ENCODE measurements at regions of chr12 and their contacts with region 1.

Region 1: DNA sequence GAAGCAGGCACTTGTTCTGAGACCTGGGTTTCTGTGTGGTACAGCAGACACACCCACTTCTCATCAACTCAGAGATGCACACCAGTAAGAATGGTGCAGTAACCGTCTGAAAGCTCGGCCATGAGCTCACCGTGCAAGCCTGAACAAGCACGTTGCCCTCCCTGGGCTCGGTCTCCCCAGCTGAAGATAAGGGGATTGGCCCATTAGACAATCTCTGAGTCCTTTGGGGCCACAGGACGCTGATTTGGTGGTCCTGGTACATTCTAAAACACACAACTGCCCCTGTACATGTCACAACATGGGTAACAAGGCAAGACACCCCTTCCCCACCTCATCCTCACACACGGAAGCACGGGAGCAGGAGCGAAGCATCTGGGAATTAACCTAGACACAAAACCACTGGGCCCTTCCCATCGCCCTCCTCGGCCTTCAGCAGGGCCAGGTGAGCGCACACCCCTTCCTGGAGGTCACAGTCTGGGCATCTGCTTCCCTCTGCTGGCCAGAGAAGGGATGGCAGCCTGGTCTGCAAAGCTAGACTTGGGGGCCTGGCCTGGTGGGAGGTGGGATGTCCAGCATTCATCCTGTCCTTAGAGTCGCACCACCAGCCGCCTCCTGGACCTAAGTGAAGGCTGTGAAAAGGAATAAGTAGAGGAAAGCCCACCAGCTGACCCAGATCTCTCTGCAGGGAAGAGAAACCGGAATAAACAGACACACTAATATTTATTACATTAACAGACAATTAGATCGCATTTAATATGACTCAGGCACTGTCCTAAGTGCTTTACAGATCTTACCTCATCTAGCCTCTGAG is 18.9 kb upstream of the SMUG1 start:
- DNase-seq: peak; percentile 87
- ATAC-seq: peak; percentile 92
- H3K4me3 Mint-ChIP-seq: no peak overlapping the region
- H3K27ac Mint-ChIP-seq: no peak overlapping the region
- H3K4me1 Mint-ChIP-seq: peaks cover 2% of the 10 kb centered on the region
- H3K27me3 Mint-ChIP-seq: peaks cover 34% of the 10 kb centered on the region

Region 2: GRCh38 chr12:54012631-54013409 is 194.9 kb before region 1 on chr12:
- CTCF ChIA-PET with region 1: interaction called, 94 read pairs
- DNase-seq: no peak
- ATAC-seq: no peak
- H3K4me3 Mint-ChIP-seq: no peak overlapping the region
- H3K27ac Mint-ChIP-seq: no peak overlapping the region
- H3K4me1 Mint-ChIP-seq: peaks cover 20% of the 10 kb centered on the region
- H3K27me3 Mint-ChIP-seq: peaks cover 90% of the 10 kb centered on the region

Region 3: DNA sequence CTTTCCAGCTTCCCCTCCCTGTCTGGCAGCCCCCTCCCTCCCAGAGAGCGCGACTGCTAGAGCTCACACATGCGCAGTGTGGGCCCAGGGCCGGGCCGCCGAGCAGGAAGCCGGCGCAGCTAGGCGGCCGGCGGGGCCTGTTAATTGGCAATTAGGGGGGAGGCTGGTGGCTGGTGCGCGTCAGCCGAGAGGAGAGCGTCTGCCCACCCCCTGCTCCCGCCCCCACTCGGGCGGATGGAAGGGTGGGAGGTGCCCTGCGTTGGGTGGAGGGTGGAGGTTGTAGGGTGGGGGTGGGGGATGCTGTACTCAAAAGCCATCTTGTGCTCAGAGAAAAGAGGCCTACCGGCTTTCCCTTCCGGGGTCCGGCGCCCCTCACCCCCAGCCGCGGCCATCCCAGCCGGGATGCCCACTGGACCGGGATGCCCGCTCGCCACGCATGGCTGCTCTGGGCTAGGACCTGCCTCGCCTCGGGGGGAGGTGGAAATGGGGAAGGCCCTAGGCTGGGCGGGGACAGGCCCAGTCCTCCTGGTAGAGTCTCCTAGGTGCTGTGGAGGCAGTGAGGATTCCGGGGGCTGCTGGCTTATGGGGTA is 189.7 kb before region 1 on chr12:
- CTCF ChIA-PET with region 1: interaction called, 158 read pairs
- DNase-seq: peak; percentile 87
- ATAC-seq: peak; percentile 96
- H3K4me3 Mint-ChIP-seq: peak overlapping the region; percentile 74
- H3K27ac Mint-ChIP-seq: peak overlapping the region; percentile 58
- H3K4me1 Mint-ChIP-seq: peaks cover 15% of the 10 kb centered on the region
- H3K27me3 Mint-ChIP-seq: peaks cover 81% of the 10 kb centered on the region

Measured in activated CD8-positive, alpha-beta memory T cell treated with anti-CD3 and anti-CD28 coated beads, Interleukin-2, amount 10 ng/mL, durations not matched to agents 7 days and 5 days (primary cell).